Mucosa of descending colon (tissue), 3 donors: ENCODE measurements at regions of chr12 and their contacts with region 1.

Region 1: DNA sequence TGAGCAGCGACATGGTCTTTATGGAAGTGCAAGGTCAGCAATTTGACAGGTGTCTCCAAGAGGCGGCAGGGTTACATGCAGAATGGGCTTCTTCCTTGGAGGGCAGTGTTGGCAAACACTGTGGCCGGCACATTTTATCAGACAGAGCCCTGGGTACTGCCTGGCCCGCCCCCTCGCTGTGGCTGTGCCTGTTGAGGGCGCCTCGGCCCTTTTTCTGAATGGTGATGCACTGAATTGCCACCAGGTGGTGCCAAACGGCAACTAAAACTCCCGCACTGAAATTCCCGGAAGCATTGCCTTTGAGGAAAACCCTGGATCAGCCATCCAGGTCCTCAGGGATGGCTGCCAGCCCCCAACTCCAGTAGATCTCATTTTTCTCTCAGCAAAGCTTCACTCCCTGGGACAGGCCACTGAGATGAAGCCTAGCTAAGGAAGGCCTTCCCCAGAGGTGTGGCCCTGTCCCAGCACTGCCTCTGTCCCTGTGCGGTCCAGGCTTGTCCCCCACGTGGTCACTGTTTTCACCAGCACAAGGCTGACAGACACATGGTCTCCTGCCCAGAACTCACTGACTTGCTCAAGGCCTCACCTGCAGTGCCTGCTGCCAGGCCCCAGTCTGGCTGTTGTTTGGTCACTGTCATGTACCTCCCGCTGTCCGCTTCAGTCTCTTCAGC is 73.6 kb downstream of the TESC start:
- DNase-seq: peak in 2 of 3 donors; percentile 65 to 67
- ATAC-seq: peak; percentile 93
- H3K4me3 ChIP-seq: no peak overlapping the region
- H3K4me1 ChIP-seq: no peaks in the 10 kb centered on the region
- CTCF ChIP-seq: peak; percentile 70

Region 2: GRCh38 chr12:117119592-117120198 is 94.1 kb after region 1 on chr12:
- intact Hi-C with region 1: loop called in 1 of 2 experiments (anchors 5 kb)
- DNase-seq: peak in 1 of 3 donors; percentile 41
- ATAC-seq: peak; percentile 58
- H3K4me3 ChIP-seq: no peak overlapping the region
- H3K4me1 ChIP-seq: no peaks in the 10 kb centered on the region
- CTCF ChIP-seq: no peak